Astrocyte of the cerebellum (primary cell): ENCODE measurements at regions of chr1 and their contacts with region 1.

Region 1: DNA sequence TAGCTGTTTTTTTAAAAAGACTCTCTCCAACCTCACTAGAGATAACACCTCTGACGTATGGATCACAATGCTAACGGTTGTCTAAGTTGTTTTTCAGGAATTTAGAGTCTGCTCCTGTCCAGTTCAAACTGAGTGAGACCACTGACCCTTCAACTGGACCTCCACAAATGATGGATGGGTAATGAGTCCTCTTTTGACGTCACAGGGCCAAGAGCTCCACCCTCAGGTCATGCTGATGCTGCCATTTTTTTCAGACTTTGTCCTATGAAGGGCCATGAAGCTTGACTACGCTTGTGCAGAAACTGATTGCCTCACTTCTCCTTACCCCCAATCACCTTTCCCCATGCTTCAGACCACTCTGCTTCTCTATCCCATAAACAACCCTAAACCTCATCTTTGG is 16.6 kb downstream of the GRIK3 start:
- DNase-seq: no peak
- H3K4me3 ChIP-seq: no peak overlapping the region
- CTCF ChIP-seq: no peak

Region 2: DNA sequence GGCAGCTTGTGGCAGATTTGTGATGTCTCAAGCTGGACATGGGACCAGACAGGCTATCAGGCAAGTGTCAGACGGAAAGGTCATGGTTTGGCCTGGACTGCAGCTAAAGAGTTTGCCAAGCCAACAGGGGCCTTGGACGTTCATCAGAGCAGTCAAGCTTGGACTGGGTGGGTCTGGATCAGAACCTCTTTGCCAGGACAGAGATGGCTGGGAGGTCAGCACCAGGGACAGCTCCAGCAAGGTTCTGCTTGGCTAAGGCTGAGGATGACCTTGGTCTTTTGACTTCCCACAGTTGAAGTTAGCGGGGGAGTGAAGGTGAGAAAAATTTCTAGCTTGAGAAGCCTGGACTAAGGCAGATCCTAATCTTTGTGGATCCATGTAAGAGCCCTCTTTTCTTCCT is 51.5 kb before region 1 on chr1:
- in situ Hi-C with region 1: loop called (anchors 5 kb)
- DNase-seq: no peak
- H3K4me3 ChIP-seq: no peak overlapping the region
- CTCF ChIP-seq: no peak